ENCODE measurements at regions of chr4 and their contacts with region 1.

Region 1: GRCh38 chr4:4673070-4673469 is 131.2 kb upstream of the STX18 start:
- DNase-seq: peak; percentile 81

Region 2: GRCh38 chr4:4880492-4880891 is 207.4 kb after region 1 on chr4:
- in situ Hi-C with region 1: loop called (anchors 25 kb)
- DNase-seq: no peak

Measured in Caki2 (cell line).